ENCODE measurements at regions of chr6 and their contacts with region 1.

Region 1: GRCh38 chr6:3841711-3842565 is 7.2 kb upstream of the FAM50B start:
- DNase-seq: peak; percentile 30
- ATAC-seq: peak; percentile 55
- H3K4me3 ChIP-seq: no peak overlapping the region; a peak in 1 of 6 replicates
- H3K27ac ChIP-seq: peak overlapping the region; percentile 97
- H3K4me1 ChIP-seq: peaks cover 61% of the 10 kb centered on the region
- H3K27me3 ChIP-seq: no peaks in the 10 kb centered on the region
- CTCF ChIP-seq: no peak
- EP300 ChIP-seq: no peak
- POLR2A ChIP-seq: no peak
- RAD21 ChIP-seq: no peak

Region 2: GRCh38 chr6:3789018-3789895 is 52.7 kb before region 1 on chr6:
- CTCF ChIA-PET with region 1: no interaction called
- POLR2A ChIA-PET with region 1: interaction called, 42 read pairs
- in situ Hi-C with region 1: no loop called
- intact Hi-C with region 1: loop called (anchors 2 kb)
- DNase-seq: peak; percentile 100
- ATAC-seq: peak; percentile 91
- H3K4me3 ChIP-seq: peak overlapping the region; percentile 40 to 73 (median 45)
- H3K27ac ChIP-seq: peak overlapping the region; percentile 97
- H3K4me1 ChIP-seq: peaks cover 62% of the 10 kb centered on the region
- H3K27me3 ChIP-seq: no peaks in the 10 kb centered on the region
- CTCF ChIP-seq: peak; percentile 7; the same call in 1 of the 2 replicates
- EP300 ChIP-seq: peak; percentile 88 to 97
- POLR2A ChIP-seq: peak; percentile 72 to 88
- RAD21 ChIP-seq: peak; percentile 21

Region 3: GRCh38 chr6:3805448-3806123 is 36.4 kb before region 1 on chr6:
- CTCF ChIA-PET with region 1: no interaction called
- POLR2A ChIA-PET with region 1: interaction called, 31 read pairs
- in situ Hi-C with region 1: no loop called
- intact Hi-C with region 1: loop called (anchors 2 kb)
- DNase-seq: peak; percentile 85
- ATAC-seq: peak; percentile 57
- H3K4me3 ChIP-seq: peak overlapping the region; percentile 40 to 63 (median 44); a peak in 5 of 6 replicates
- H3K27ac ChIP-seq: peak overlapping the region; percentile 99
- H3K4me1 ChIP-seq: peaks cover 70% of the 10 kb centered on the region
- H3K27me3 ChIP-seq: no peaks in the 10 kb centered on the region
- CTCF ChIP-seq: 0 out of 2 replicates have a peak, but pooled peaks have one; percentile 5
- EP300 ChIP-seq: 0 out of 4 replicates have a peak, but pooled peaks of 1 of the 2 experiments have one; percentile 24
- POLR2A ChIP-seq: no peak
- RAD21 ChIP-seq: no peak

Region 4: GRCh38 chr6:3825851-3826581 is 15.9 kb before region 1 on chr6:
- CTCF ChIA-PET with region 1: no interaction called
- POLR2A ChIA-PET with region 1: interaction called, 14 read pairs
- in situ Hi-C with region 1: no loop called
- intact Hi-C with region 1: no loop called
- DNase-seq: peak; percentile 73
- ATAC-seq: peak; percentile 78
- H3K4me3 ChIP-seq: peak overlapping the region; percentile 24 to 43 (median 31); a peak in 5 of 6 replicates
- H3K27ac ChIP-seq: peak overlapping the region; percentile 48
- H3K4me1 ChIP-seq: peaks cover 49% of the 10 kb centered on the region
- H3K27me3 ChIP-seq: no peaks in the 10 kb centered on the region
- CTCF ChIP-seq: no peak
- EP300 ChIP-seq: no peak
- POLR2A ChIP-seq: no peak
- RAD21 ChIP-seq: no peak

Region 5: GRCh38 chr6:3869632-3870527 is 27.9 kb after region 1 on chr6:
- CTCF ChIA-PET with region 1: no interaction called
- POLR2A ChIA-PET with region 1: interaction called, 21 read pairs
- in situ Hi-C with region 1: no loop called
- intact Hi-C with region 1: loop called (anchors 5 kb)
- DNase-seq: peak; percentile 92
- ATAC-seq: peak; percentile 84
- H3K4me3 ChIP-seq: peak overlapping the region; percentile 11 to 64 (median 41)
- H3K27ac ChIP-seq: peak overlapping the region; percentile 79
- H3K4me1 ChIP-seq: peaks cover 68% of the 10 kb centered on the region
- H3K27me3 ChIP-seq: no peaks in the 10 kb centered on the region
- CTCF ChIP-seq: no peak
- EP300 ChIP-seq: peak in 1 of 2 experiments; percentile 89; a peak in 2 of 4 replicates
- POLR2A ChIP-seq: peak; percentile 33 to 85; a peak in 3 of 4 replicates
- RAD21 ChIP-seq: no peak

Region 6: DNA sequence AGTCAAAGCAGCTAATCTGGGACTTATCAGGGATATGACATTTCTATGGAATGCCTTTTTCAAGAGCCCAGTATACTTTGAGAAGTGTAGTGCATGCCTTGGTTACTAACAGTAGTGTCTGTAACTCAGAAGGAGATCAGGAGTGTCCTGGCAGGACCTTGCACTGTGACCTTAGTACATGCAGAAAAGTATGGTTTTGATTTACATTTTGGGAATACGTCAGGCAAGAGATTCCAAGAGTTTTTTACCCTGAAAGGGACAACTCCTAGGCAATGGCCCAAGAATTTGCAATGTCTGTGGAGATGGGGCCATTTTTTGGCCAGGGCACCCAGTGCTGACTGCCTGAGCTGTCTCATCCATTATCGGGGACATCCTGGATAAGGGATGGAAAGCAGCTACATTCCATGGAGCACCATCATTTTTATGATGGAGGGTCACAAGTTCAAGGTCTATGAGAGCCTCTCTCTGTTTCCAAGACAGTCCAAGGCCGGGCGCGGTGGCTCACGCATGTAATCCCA is 87.4 kb after region 1 on chr6:
- CTCF ChIA-PET with region 1: no interaction called
- POLR2A ChIA-PET with region 1: interaction called, 8 read pairs
- in situ Hi-C with region 1: no loop called
- intact Hi-C with region 1: loop called (anchors 2 kb)
- DNase-seq: no peak
- ATAC-seq: no peak
- H3K4me3 ChIP-seq: no peak overlapping the region
- H3K27ac ChIP-seq: no peak overlapping the region
- H3K4me1 ChIP-seq: peaks cover 16% of the 10 kb centered on the region
- H3K27me3 ChIP-seq: no peaks in the 10 kb centered on the region
- CTCF ChIP-seq: no peak
- EP300 ChIP-seq: no peak
- POLR2A ChIP-seq: no peak
- RAD21 ChIP-seq: no peak